SK-N-SH (cell line): ENCODE measurements at regions of chr17 and their contacts with region 1.

Region 1: DNA sequence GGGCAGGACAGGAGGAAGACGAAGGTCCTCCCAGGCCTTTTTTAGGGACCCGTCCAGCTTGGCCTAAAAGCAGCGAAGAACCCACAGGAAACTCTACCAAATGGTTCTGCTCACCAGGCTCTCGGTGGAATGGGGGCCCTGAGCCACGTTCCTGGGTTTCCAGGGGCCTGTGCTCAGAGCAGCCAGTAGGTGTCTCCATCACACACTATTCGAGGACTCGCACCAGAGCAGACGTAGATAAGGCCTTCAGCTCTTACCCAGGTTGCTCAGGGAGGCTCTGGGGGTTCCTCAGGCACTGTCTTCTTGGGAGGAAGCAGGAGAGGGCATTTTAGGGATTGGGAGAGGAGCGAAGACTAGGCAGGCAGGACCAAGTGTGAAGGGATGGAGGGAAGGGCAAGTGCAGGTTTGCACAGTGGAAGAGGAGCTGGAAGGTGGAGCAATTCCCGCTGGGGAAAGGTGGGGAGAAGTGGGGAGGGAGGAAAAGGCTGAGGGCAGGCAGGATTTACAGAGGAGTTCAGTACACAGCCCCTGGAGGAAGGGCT is 157.1 kb downstream of the RGS9 start:
- DNase-seq: peak; percentile 87
- H3K4me3 ChIP-seq: no peak overlapping the region; a peak in 1 of 4 replicates
- H3K27ac ChIP-seq: no peak overlapping the region
- H3K4me1 ChIP-seq: peaks cover 0 to 2% of the 10 kb centered on the region in 2 experiments; a peak in 1 of 4 replicates
- H3K27me3 ChIP-seq: no peaks in the 10 kb centered on the region
- CTCF ChIP-seq: peak; percentile 93
- EP300 ChIP-seq: no peak
- RAD21 ChIP-seq: peak; percentile 98

Region 2: GRCh38 chr17:65121916-65122806 is 172.1 kb before region 1 on chr17:
- CTCF ChIA-PET with region 1: no interaction called
- POLR2A ChIA-PET with region 1: no interaction called
- DNase-seq: no peak
- H3K4me3 ChIP-seq: peak overlapping the region; percentile 51 to 70
- H3K27ac ChIP-seq: peak overlapping the region in 1 of 2 experiments; percentile 57; a peak in 1 of 4 replicates
- H3K4me1 ChIP-seq: peaks cover 8% of the 10 kb centered on the region in 2 experiments; a peak in 3 of 4 replicates
- H3K27me3 ChIP-seq: no peaks in the 10 kb centered on the region
- CTCF ChIP-seq: no peak
- EP300 ChIP-seq: no peak
- RAD21 ChIP-seq: no peak

Region 3: GRCh38 chr17:65278050-65278819 is 16.0 kb before region 1 on chr17:
- CTCF ChIA-PET with region 1: interaction called, 32 read pairs
- POLR2A ChIA-PET with region 1: no interaction called
- DNase-seq: peak; percentile 89
- H3K4me3 ChIP-seq: no peak overlapping the region
- H3K27ac ChIP-seq: no peak overlapping the region
- H3K4me1 ChIP-seq: no peaks in the 10 kb centered on the region; a peak in 1 of 4 replicates
- H3K27me3 ChIP-seq: no peaks in the 10 kb centered on the region
- CTCF ChIP-seq: peak; percentile 87
- EP300 ChIP-seq: no peak
- RAD21 ChIP-seq: peak; percentile 91

Region 4: GRCh38 chr17:65314212-65314611 is 20.0 kb after region 1 on chr17:
- CTCF ChIA-PET with region 1: interaction called, 13 read pairs
- POLR2A ChIA-PET with region 1: no interaction called
- DNase-seq: no peak
- H3K4me3 ChIP-seq: no peak overlapping the region
- H3K27ac ChIP-seq: no peak overlapping the region
- H3K4me1 ChIP-seq: peaks cover 0 to 3% of the 10 kb centered on the region in 2 experiments; a peak in 2 of 4 replicates
- H3K27me3 ChIP-seq: peaks cover 49% of the 10 kb centered on the region; the same call in 1 of the 2 replicates
- CTCF ChIP-seq: no peak
- EP300 ChIP-seq: no peak
- RAD21 ChIP-seq: no peak

Region 5: DNA sequence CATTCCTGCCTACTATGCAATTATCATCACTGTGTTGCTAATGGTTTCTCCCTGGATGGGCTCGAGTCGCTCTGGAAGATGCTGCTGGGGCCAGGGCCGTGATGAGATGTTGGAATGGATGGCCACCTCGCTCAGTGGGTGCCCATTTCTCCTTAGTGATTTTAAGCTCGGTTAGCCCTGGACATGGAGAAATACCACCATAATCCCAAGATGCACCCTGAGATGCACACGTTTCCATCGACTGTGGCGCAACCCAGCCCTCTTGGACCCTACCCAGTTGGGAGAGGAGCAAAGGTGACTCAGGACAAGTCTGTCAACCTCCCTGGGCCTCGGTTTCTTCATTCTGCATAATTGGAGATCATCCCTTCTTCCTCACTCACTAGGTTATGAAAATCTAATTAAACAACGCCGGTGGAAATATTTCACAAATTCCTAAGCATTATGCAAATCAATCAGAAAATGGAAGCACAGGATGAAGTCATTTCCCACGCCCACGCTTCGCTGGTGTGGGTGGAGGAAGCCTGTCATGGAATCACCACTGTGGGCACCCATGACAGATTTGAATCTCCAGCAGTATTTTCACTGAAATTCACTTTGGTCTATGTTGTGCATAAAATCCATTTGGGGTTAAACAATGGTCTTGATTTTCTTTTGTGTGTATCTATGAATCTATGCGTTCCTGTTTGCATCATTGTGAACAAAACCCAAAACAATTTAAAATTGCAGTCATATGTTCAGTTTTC is 72.0 kb after region 1 on chr17:
- CTCF ChIA-PET with region 1: no interaction called
- POLR2A ChIA-PET with region 1: no interaction called
- DNase-seq: no peak
- H3K4me3 ChIP-seq: no peak overlapping the region
- H3K27ac ChIP-seq: no peak overlapping the region
- H3K4me1 ChIP-seq: no peaks in the 10 kb centered on the region; a peak in 1 of 4 replicates
- H3K27me3 ChIP-seq: peaks cover 6% of the 10 kb centered on the region; the same call in 1 of the 2 replicates
- CTCF ChIP-seq: no peak
- EP300 ChIP-seq: no peak
- RAD21 ChIP-seq: no peak

Region 6: GRCh38 chr17:65794572-65794971 is 500.3 kb after region 1 on chr17:
- CTCF ChIA-PET with region 1: interaction called, 24 read pairs
- POLR2A ChIA-PET with region 1: no interaction called
- DNase-seq: peak; percentile 43
- H3K4me3 ChIP-seq: no peak overlapping the region
- H3K27ac ChIP-seq: no peak overlapping the region
- H3K4me1 ChIP-seq: no peaks in the 10 kb centered on the region
- H3K27me3 ChIP-seq: no peaks in the 10 kb centered on the region
- CTCF ChIP-seq: peak; percentile 61
- EP300 ChIP-seq: no peak
- RAD21 ChIP-seq: peak; percentile 71

Region 7: GRCh38 chr17:66165513-66166123 is 871.4 kb after region 1 on chr17:
- CTCF ChIA-PET with region 1: interaction called, 135 read pairs
- POLR2A ChIA-PET with region 1: no interaction called
- DNase-seq: peak; percentile 78
- H3K4me3 ChIP-seq: no peak overlapping the region; a peak in 1 of 4 replicates
- H3K27ac ChIP-seq: no peak overlapping the region; a peak in 1 of 4 replicates
- H3K4me1 ChIP-seq: no peaks in the 10 kb centered on the region
- H3K27me3 ChIP-seq: no peaks in the 10 kb centered on the region
- CTCF ChIP-seq: peak; percentile 98
- EP300 ChIP-seq: no peak
- RAD21 ChIP-seq: peak; percentile 99